ENCODE measurements at regions of chr2 and their contacts with region 1.

Region 1: DNA sequence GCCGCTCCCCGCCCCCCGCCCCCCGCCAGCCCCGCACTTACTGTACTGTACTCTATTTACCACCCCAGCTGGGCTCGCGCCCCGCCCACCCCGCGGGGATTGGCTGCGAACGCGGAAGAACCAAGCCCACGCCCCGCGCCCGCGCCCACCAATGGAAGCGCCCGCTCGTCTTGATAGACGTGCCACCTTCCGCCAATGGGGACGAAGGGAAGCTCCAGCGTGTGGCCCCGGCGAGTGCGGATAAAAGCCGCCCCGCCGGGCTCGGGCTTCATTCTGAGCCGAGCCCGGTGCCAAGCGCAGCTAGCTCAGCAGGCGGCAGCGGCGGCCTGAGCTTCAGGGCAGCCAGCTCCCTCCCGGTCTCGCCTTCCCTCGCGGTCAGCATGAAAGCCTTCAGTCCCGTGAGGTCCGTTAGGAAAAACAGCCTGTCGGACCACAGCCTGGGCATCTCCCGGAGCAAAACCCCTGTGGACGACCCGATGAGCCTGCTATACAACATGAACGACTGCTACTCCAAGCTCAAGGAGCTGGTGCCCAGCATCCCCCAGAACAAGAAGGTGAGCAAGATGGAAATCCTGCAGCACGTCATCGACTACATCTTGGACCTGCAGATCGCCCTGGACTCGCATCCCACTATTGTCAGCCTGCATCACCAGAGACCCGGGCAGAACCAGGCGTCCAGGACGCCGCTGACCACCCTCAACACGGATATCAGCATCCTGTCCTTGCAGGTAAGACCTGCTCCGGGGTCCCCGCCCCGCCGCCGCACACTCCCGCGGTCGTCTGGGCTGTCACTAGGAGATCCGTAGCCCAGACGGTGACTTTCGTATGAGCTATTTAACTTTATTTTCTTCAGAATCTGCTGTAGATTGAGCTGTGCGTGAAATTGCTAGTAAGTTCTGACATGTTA is at the start of gene ID2:
- DNase-seq: peak; percentile 97 to 99
- ATAC-seq: peak; percentile 62 to 71
- H3K4me3 ChIP-seq: peak within 1 kb of the TSS; percentile 60 to 75 (median 72)
- H3K27ac ChIP-seq: peak within 1 kb of the TSS; percentile 92 to 99 (median 98)
- H3K4me1 ChIP-seq: peaks cover 32 to 43% of the 10 kb centered on the region in 2 donors
- H3K27me3 ChIP-seq: no peaks in the 10 kb centered on the region
- CTCF ChIP-seq: no peak
- POLR2A ChIP-seq: peak; percentile 97 to 99
- total RNA-seq, gene ID2: 16.6 to 35.9 (median 27.4) TPM

Region 2: GRCh38 chr2:7097348-7097895 is 1584.6 kb before region 1 on chr2:
- in situ Hi-C with region 1: loop called (anchors 25 kb)
- intact Hi-C with region 1: no loop called
- DNase-seq: peak; percentile 25 to 42
- ATAC-seq: peak; percentile 85 to 89
- H3K4me3 ChIP-seq: peak overlapping the region in 2 of 4 donors; percentile 38 to 40
- H3K27ac ChIP-seq: no peak overlapping the region
- H3K4me1 ChIP-seq: peaks cover 2 to 3% of the 10 kb centered on the region in 2 donors
- H3K27me3 ChIP-seq: no peaks in the 10 kb centered on the region
- CTCF ChIP-seq: peak; percentile 81 to 97 (median 89)
- POLR2A ChIP-seq: no peak

Region 3: DNA sequence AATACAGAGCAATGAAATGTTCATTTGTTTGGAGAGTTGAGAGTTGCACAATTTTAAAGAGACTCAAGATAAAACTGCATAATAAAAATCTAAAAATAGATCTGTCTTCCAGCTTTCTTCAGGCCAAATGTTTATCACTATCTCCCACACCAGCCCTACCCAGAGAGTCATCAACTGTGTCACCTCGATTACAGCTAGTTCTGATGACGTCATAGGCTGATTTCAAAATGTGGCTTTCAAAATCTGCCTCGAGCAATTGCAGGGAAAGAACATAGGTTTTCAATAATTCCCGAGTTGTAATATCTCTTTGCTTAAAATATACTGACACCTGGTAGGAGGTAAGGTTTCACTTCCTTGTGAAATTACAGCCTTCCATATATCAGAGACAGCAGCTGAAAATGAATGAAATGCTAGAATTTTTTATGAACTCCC is 677.8 kb before region 1 on chr2:
- in situ Hi-C with region 1: loop called in 1 of 4 experiments (anchors 25 kb)
- intact Hi-C with region 1: loop called (anchors 2 kb)
- DNase-seq: peak; percentile 40 to 57
- ATAC-seq: peak; percentile 85 to 89
- H3K4me3 ChIP-seq: no peak overlapping the region
- H3K27ac ChIP-seq: peak overlapping the region; percentile 71 to 91 (median 74)
- H3K4me1 ChIP-seq: peaks cover 9 to 12% of the 10 kb centered on the region in 2 donors
- H3K27me3 ChIP-seq: no peaks in the 10 kb centered on the region
- CTCF ChIP-seq: no peak
- POLR2A ChIP-seq: no peak

Region 4: DNA sequence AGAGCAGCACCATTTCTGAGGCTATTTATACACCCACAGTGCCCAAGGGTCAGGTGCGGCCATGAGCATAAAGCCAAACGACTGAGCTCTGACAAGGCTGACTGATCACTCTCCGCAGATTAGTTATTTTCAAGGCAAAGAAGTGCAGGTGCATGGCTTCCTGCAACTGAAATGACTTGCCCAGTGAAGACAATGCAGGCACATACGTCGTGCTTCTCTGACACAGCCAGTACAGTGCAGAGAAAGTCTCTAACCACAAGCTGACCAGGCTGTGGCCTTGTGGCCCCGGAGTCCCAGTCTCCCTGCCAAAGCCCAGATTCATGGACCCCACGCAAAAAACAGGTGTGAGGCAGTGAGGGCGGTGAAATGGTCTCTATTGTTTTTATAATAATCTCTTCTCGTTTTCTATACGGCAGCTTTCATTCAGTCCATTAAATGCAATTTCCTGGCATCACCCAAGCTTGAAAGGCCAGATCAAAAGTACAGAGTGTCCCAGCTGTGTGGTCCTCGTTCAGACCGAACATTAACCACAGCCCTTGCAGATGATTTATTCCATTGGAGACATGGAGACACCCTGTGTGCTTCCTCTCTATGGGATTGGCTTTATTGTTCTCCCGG is 447.2 kb before region 1 on chr2:
- in situ Hi-C with region 1: no loop called
- intact Hi-C with region 1: loop called (anchors 5 kb)
- DNase-seq: peak; percentile 34 to 43
- ATAC-seq: peak; percentile 84 to 92
- H3K4me3 ChIP-seq: no peak overlapping the region
- H3K27ac ChIP-seq: peak overlapping the region in 3 of 4 donors; percentile 9 to 76 (median 69)
- H3K4me1 ChIP-seq: peaks cover 0 to 22% of the 10 kb centered on the region in 2 donors
- H3K27me3 ChIP-seq: no peaks in the 10 kb centered on the region
- CTCF ChIP-seq: no peak
- POLR2A ChIP-seq: no peak

Region 5: DNA sequence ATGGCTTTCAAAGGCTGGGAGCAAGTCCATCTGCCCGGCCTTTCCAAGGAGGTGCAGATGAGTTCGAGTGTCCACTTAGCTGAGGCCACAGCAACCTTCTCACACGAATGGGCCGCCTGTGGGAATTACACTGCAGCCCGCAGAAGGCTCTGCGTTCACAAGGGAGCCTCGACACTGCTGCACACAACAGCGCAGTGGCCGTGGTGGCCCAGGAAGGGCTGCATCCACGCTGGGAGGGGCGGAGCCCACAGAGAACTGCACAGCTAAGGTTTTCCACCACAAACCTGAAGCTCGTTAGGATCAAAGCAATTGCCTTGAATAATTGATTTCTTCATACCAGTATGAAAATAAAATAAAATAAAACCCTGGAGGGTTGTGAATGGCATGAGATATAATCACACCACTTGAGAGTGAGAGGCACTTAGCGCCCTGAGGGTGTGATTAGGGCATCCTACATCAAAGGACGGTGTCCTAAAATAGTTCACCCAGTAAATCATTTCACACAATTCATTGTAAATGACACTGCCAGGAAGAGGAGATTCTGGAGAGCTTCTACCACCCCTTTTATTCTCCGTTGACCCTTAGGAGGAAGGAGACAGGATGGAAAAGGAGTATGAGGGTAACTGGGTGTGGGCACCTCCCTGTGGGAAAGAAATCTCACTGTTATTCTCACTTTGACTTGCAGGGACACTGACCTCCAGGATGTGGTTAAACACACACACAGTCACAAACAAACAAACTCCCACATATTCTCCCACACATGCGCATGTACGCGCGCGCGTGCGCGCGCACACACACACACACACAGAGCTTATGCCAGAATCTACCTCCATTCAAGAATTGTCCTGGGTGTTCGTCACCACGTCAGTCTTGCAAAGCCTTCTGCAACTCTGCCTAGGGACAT is 256.8 kb before region 1 on chr2:
- in situ Hi-C with region 1: no loop called
- intact Hi-C with region 1: no loop called
- DNase-seq: no peak
- ATAC-seq: no peak
- H3K4me3 ChIP-seq: no peak overlapping the region
- H3K27ac ChIP-seq: no peak overlapping the region
- H3K4me1 ChIP-seq: no peaks in the 10 kb centered on the region
- H3K27me3 ChIP-seq: no peaks in the 10 kb centered on the region
- CTCF ChIP-seq: no peak
- POLR2A ChIP-seq: no peak

Region 6: GRCh38 chr2:8598295-8599165 is 83.5 kb before region 1 on chr2:
- in situ Hi-C with region 1: no loop called
- intact Hi-C with region 1: no loop called
- DNase-seq: peak in 1 of 2 donors; percentile 40
- ATAC-seq: peak; percentile 52 to 86
- H3K4me3 ChIP-seq: no peak overlapping the region
- H3K27ac ChIP-seq: no peak overlapping the region
- H3K4me1 ChIP-seq: no peaks in the 10 kb centered on the region
- H3K27me3 ChIP-seq: no peaks in the 10 kb centered on the region
- CTCF ChIP-seq: no peak
- POLR2A ChIP-seq: no peak

Region 7: GRCh38 chr2:8661736-8662135 is 20.3 kb before region 1 on chr2:
- in situ Hi-C with region 1: no loop called
- intact Hi-C with region 1: loop called (anchors 2 kb)
- DNase-seq: peak in 1 of 2 donors; percentile 44
- ATAC-seq: peak in 1 of 2 donors; percentile 12
- H3K4me3 ChIP-seq: no peak overlapping the region
- H3K27ac ChIP-seq: peak overlapping the region in 1 of 4 donors; percentile 15
- H3K4me1 ChIP-seq: peaks cover 4 to 13% of the 10 kb centered on the region in 2 donors
- H3K27me3 ChIP-seq: no peaks in the 10 kb centered on the region
- CTCF ChIP-seq: no peak
- POLR2A ChIP-seq: no peak

Region 8: DNA sequence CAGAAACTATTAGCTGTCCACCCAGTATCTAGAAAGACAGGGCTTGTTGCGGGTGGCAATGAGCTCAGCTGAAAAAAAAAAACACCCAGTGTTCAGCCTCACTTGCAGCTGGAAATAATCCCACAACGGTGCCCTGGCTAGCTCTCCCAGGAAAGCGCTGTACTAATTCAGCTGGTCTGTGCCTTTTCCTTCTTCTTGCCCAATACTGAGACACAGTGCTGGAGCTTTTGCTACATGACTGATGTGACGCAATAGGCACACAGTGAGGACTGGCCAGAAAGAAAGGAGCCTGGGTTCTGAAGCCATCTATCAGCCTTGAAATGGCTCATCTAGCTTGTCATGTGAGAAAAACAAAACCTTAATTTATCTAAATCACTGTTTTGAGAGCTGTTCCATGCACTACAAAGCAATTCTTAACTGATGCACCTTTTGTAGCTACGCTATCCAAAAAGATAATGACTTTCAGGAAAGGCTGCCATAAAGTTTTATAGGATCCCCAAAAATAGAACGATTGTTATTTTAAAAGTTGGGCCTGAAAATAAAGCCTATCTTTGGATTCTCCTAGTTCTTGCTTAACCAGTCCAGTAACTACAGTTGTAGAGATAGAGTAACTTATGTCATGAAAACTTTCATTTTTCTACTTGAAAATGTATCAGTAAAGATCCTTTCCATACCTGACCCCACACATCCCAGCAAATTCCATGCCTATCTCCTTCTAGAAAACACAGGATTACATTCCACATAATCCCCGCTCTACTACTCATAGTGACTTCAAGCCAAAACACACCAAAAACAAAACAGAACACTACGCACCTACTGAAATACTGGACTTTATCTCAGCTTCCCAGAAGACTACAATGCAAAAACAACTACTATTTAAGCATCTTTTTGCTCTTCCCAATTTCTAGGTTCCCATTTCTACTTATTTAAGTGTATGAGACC is 139.5 kb after region 1 on chr2:
- in situ Hi-C with region 1: no loop called
- intact Hi-C with region 1: loop called (anchors 5 kb)
- DNase-seq: peak; percentile 87 to 94
- ATAC-seq: peak; percentile 97 to 98
- H3K4me3 ChIP-seq: no peak overlapping the region
- H3K27ac ChIP-seq: peak overlapping the region; percentile 85 to 96 (median 90)
- H3K4me1 ChIP-seq: peaks cover 27 to 29% of the 10 kb centered on the region in 2 donors
- H3K27me3 ChIP-seq: no peaks in the 10 kb centered on the region
- CTCF ChIP-seq: no peak
- POLR2A ChIP-seq: peak in 1 of 2 donors; percentile 17